Mammary epithelial cell (primary cell): ENCODE measurements at regions of chr20 and their contacts with region 1.

Region 1: DNA sequence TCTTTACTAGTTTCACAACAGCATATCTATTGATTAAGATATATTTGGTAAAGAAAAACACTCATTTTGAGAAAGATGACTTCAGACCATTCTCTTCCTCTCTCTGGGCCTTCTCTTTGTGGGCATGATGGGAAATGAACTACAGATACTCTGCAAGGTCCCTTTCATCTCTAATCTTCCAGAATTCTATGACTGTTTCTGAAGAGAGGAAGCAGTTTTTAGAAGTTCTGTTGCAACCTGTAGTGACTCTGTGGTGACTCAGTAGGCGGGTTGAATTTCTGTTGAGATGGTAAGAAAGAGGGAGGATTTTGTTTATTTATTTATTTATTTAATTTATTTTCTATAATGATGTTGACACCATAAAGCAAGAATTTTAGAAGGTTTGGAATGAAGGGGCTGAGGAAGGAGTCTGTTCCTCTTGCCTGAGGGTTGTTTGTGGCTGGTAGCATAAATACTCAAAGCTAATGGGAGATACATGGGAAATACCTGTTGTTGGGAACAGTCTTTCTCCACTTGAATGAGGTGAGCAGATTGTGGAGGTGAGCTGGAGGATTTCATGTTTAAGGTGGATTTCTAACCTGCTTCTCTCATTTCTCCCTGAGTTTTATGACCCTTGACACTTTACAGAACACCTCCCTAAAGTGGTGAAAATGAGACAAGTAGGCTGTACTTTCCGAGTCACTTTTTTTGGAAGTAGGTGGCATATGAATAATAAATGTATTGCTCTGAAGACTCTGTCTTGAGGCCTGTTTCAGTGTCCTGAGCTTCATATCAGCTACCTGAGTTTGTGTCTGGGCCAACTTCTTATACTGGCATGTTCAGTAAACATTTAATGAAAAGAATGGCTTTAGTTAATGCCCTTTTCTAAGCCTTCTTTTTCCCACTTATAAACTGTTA is 15.0 kb downstream of the ACSS2 start:
- DNase-seq: peak; percentile 84
- H3K4me3 ChIP-seq: no peak overlapping the region
- H3K27ac ChIP-seq: peak overlapping the region; percentile 40
- H3K4me1 ChIP-seq: peaks cover 27% of the 10 kb centered on the region
- H3K27me3 ChIP-seq: no peaks in the 10 kb centered on the region
- CTCF ChIP-seq: no peak

Region 2: GRCh38 chr20:34350095-34350494 is 541.3 kb before region 1 on chr20:
- CTCF ChIA-PET with region 1: no interaction called
- dilution Hi-C with region 1: no loop called
- in situ Hi-C with region 1: no loop called
- intact Hi-C with region 1: no loop called
- DNase-seq: no peak
- H3K4me3 ChIP-seq: no peak overlapping the region
- H3K27ac ChIP-seq: no peak overlapping the region
- H3K4me1 ChIP-seq: peaks cover 8% of the 10 kb centered on the region
- H3K27me3 ChIP-seq: no peaks in the 10 kb centered on the region
- CTCF ChIP-seq: no peak

Region 3: GRCh38 chr20:34806255-34806654 is 85.2 kb before region 1 on chr20:
- CTCF ChIA-PET with region 1: no interaction called
- dilution Hi-C with region 1: no loop called
- in situ Hi-C with region 1: no loop called
- intact Hi-C with region 1: no loop called
- DNase-seq: no peak
- H3K4me3 ChIP-seq: no peak overlapping the region
- H3K27ac ChIP-seq: no peak overlapping the region
- H3K4me1 ChIP-seq: no peaks in the 10 kb centered on the region
- H3K27me3 ChIP-seq: no peaks in the 10 kb centered on the region
- CTCF ChIP-seq: no peak

Region 4: DNA sequence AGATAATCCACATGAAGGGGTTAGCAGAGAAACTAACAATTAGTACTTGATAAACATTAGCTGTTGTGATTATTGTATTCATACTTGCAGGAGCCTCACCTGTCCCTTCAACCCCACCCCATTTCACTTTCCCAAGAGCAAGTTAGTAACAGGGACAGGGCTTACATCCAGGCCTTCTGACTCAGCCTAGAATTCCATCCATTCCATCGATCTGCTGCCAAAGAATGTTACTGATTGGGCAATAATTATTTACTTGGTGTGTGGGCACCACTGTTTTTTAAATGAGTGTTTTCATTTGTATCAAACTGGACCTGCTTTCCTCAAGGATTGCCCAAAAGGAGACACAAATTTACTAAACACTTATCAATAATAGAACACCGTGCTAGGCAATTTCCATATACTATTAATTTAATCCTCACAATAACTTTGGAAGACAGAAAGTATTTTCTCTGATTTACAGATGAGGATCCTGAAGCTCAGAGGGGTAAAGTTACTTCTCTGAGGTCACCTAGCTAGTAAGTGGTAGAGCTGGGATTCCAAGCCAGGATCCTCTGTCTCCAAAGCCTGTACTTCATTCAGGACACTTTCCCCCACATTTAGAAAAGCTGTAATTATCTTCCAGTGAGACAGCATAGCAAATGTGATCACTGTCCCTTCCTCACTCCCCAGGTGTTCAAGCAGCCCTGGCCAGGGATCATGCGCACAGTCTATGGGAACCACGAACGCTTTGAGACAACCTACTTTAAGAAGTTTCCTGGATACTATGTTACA is 31.4 kb after region 1 on chr20:
- CTCF ChIA-PET with region 1: no interaction called
- dilution Hi-C with region 1: no loop called
- in situ Hi-C with region 1: no loop called
- intact Hi-C with region 1: loop called (anchors 1 kb)
- DNase-seq: peak; percentile 80
- H3K4me3 ChIP-seq: no peak overlapping the region
- H3K27ac ChIP-seq: no peak overlapping the region
- H3K4me1 ChIP-seq: peaks cover 42% of the 10 kb centered on the region
- H3K27me3 ChIP-seq: no peaks in the 10 kb centered on the region
- CTCF ChIP-seq: no peak

Region 5: GRCh38 chr20:35013421-35014411 is 122.3 kb after region 1 on chr20:
- CTCF ChIA-PET with region 1: no interaction called
- dilution Hi-C with region 1: no loop called
- in situ Hi-C with region 1: no loop called
- intact Hi-C with region 1: no loop called
- DNase-seq: no peak
- H3K4me3 ChIP-seq: no peak overlapping the region
- H3K27ac ChIP-seq: no peak overlapping the region
- H3K4me1 ChIP-seq: no peaks in the 10 kb centered on the region
- H3K27me3 ChIP-seq: no peaks in the 10 kb centered on the region
- CTCF ChIP-seq: no peak